A673 (cell line): ENCODE measurements at regions of chr2 and their contacts with region 1.

Region 1: GRCh38 chr2:25548601-25549000 is 124.8 kb downstream of the DTNB start:
- DNase-seq: no peak
- H3K4me3 ChIP-seq: no peak overlapping the region
- H3K27ac ChIP-seq: no peak overlapping the region
- H3K4me1 ChIP-seq: no peaks in the 10 kb centered on the region
- H3K27me3 ChIP-seq: no peaks in the 10 kb centered on the region
- CTCF ChIP-seq: no peak

Region 2: GRCh38 chr2:25326326-25327013 is 222.1 kb before region 1 on chr2:
- CTCF ChIA-PET with region 1: interaction called, 10 read pairs
- POLR2A ChIA-PET with region 1: no interaction called
- intact Hi-C with region 1: no loop called
- DNase-seq: no peak
- H3K4me3 ChIP-seq: no peak overlapping the region
- H3K27ac ChIP-seq: no peak overlapping the region
- H3K4me1 ChIP-seq: no peaks in the 10 kb centered on the region
- H3K27me3 ChIP-seq: no peaks in the 10 kb centered on the region
- CTCF ChIP-seq: no peak